ENCODE measurements at regions of chr12 and their contacts with region 1.

Region 1: DNA sequence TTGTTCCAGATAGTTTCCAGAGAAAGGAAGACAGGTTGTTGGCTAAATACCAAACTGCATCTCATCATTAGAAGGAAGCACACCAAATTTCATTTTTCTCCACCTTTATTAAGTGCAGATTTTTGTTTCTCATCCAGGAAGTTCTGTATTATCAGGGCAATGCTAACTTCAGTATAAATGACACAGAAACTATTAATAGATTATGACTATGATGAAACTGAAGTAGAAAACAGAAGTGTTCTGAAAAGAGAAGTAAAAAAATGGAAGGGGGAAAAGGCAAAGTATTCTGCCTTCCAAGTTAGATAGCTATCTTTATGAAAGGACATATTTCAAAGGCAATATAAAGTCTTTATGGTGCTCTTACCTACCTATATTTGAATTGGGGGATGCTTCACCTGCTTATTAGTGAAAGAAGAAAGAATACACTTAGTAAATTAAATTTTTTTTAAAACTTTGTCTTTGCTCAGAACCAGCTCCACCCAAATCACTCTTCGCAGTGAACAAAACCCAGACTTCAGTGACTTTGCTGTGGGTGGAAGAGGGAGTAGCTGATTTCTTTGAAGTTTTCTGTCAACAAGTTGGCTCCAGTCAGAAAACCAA is 223.9 kb downstream of the PTPRO start:
- DNase-seq: no peak
- ATAC-seq: peak; percentile 87
- H3K4me3 Mint-ChIP-seq: peak overlapping the region; percentile 46
- H3K27ac Mint-ChIP-seq: peak overlapping the region; percentile 78
- H3K4me1 Mint-ChIP-seq: peaks cover 29% of the 10 kb centered on the region
- H3K27me3 Mint-ChIP-seq: no peaks in the 10 kb centered on the region

Region 2: GRCh38 chr12:15488481-15488880 is 57.7 kb before region 1 on chr12:
- POLR2A ChIA-PET with region 1: no interaction called
- DNase-seq: no peak
- ATAC-seq: no peak
- H3K4me3 Mint-ChIP-seq: no peak overlapping the region
- H3K27ac Mint-ChIP-seq: no peak overlapping the region
- H3K4me1 Mint-ChIP-seq: no peaks in the 10 kb centered on the region
- H3K27me3 Mint-ChIP-seq: peaks cover 5% of the 10 kb centered on the region

Region 3: DNA sequence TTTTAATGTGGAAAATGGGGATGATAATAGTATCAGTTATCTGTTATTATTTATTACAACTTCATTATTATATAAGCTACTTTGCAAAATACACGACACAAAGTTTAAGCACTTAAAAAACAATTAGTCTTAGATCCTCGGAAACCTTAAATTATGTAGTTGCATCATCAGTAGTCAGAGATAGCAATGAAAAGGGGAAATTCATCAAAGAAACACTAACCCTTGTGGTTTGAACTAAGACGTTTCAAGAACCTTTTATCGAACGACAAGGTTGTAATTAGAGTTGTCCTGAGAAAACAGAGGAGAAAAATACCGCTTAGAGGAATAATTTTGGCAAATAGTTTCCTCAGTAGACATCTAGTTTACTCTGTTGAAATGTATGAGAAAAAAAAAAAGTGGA is 25.4 kb before region 1 on chr12:
- POLR2A ChIA-PET with region 1: no interaction called
- DNase-seq: no peak
- ATAC-seq: no peak
- H3K4me3 Mint-ChIP-seq: no peak overlapping the region
- H3K27ac Mint-ChIP-seq: no peak overlapping the region
- H3K4me1 Mint-ChIP-seq: peaks cover 3% of the 10 kb centered on the region
- H3K27me3 Mint-ChIP-seq: peaks cover 38% of the 10 kb centered on the region

Region 4: DNA sequence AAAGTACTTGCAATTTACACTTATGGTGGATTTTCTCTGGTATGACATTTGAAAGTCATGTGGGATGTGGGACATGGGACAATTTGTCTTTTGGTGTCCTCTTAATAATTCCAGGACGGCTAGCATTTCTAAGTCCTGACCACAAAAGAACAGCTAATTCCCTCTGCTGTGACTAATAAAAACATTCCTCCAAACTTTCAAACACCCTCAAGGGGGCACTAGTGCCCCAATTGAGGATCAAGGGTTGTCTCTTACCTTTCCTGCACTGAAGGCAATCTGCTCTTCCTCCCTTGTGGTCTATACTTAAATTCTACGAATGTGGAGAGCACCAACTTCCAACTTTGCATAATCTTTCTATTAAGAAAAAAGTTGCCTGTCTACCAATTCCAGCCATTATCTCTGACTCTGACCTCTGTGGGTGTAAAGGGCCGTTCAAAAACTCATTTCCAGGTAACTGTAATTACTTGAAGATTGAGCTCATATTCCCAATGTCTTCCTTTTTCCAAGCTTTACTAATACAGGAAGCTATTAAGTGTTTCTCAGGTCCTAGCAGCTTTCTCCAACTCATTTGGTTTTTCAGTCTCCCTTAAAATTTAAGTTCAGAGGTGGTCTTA is 13.7 kb before region 1 on chr12:
- POLR2A ChIA-PET with region 1: interaction called, 11 read pairs
- DNase-seq: no peak
- ATAC-seq: peak; percentile 50
- H3K4me3 Mint-ChIP-seq: peak overlapping the region; percentile 37
- H3K27ac Mint-ChIP-seq: no peak overlapping the region
- H3K4me1 Mint-ChIP-seq: peaks cover 12% of the 10 kb centered on the region
- H3K27me3 Mint-ChIP-seq: peaks cover 4% of the 10 kb centered on the region

Region 5: GRCh38 chr12:15575671-15576541 is 29.7 kb after region 1 on chr12:
- POLR2A ChIA-PET with region 1: interaction called, 13 read pairs
- DNase-seq: no peak
- ATAC-seq: no peak
- H3K4me3 Mint-ChIP-seq: no peak overlapping the region
- H3K27ac Mint-ChIP-seq: peak overlapping the region; percentile 57
- H3K4me1 Mint-ChIP-seq: peaks cover 27% of the 10 kb centered on the region
- H3K27me3 Mint-ChIP-seq: no peaks in the 10 kb centered on the region